Mammary epithelial cell (primary cell): ENCODE measurements at regions of chr2 and their contacts with region 1.

Region 1: GRCh38 chr2:169528271-169528701 is 18.8 kb downstream of the KLHL41 start:
- DNase-seq: peak; percentile 45
- H3K4me3 ChIP-seq: no peak overlapping the region
- H3K27ac ChIP-seq: no peak overlapping the region
- H3K4me1 ChIP-seq: no peaks in the 10 kb centered on the region
- H3K27me3 ChIP-seq: no peaks in the 10 kb centered on the region
- CTCF ChIP-seq: peak; percentile 83 to 88

Region 2: GRCh38 chr2:169584005-169584877 is 56.0 kb after region 1 on chr2 and contains the start of gene PPIG:
- CTCF ChIA-PET with region 1: interaction called, 12 read pairs
- dilution Hi-C with region 1: no loop called
- in situ Hi-C with region 1: no loop called
- intact Hi-C with region 1: no loop called
- DNase-seq: peak; percentile 82
- H3K4me3 ChIP-seq: peak within 1 kb of the TSS; percentile 67 to 95 (median 90)
- H3K27ac ChIP-seq: peak within 1 kb of the TSS; percentile 98
- H3K4me1 ChIP-seq: peaks cover 6% of the 10 kb centered on the region
- H3K27me3 ChIP-seq: no peaks in the 10 kb centered on the region
- CTCF ChIP-seq: no peak
- total RNA-seq, gene PPIG: 22.8 to 49.6 TPM

Region 3: GRCh38 chr2:169676357-169676756 is 148.1 kb after region 1 on chr2:
- CTCF ChIA-PET with region 1: no interaction called
- dilution Hi-C with region 1: no loop called
- in situ Hi-C with region 1: no loop called
- intact Hi-C with region 1: loop called (anchors 1 kb)
- DNase-seq: no peak
- H3K4me3 ChIP-seq: no peak overlapping the region
- H3K27ac ChIP-seq: no peak overlapping the region
- H3K4me1 ChIP-seq: no peaks in the 10 kb centered on the region
- H3K27me3 ChIP-seq: no peaks in the 10 kb centered on the region
- CTCF ChIP-seq: peak in 1 of 2 donors; percentile 9

Region 4: GRCh38 chr2:169798718-169799592 is 270.7 kb after region 1 on chr2 and contains the start of gene SSB:
- CTCF ChIA-PET with region 1: no interaction called
- dilution Hi-C with region 1: no loop called
- in situ Hi-C with region 1: no loop called
- intact Hi-C with region 1: loop called (anchors 10 kb)
- DNase-seq: peak; percentile 95
- H3K4me3 ChIP-seq: peak within 1 kb of the TSS; percentile 53 to 89 (median 80)
- H3K27ac ChIP-seq: peak within 1 kb of the TSS; percentile 89
- H3K4me1 ChIP-seq: peaks cover 6% of the 10 kb centered on the region
- H3K27me3 ChIP-seq: no peaks in the 10 kb centered on the region
- CTCF ChIP-seq: no peak
- total RNA-seq, gene SSB: 55.3 to 99.6 TPM